Calu3 (cell line): ENCODE measurements at regions of chr2 and their contacts with region 1.

Region 1: GRCh38 chr2:158753641-158754611 is 41.2 kb upstream of the DAPL1 start:
- DNase-seq: peak; percentile 43
- H3K4me3 Mint-ChIP-seq: no peak overlapping the region
- H3K27ac Mint-ChIP-seq: no peak overlapping the region
- H3K4me1 Mint-ChIP-seq: no peaks in the 10 kb centered on the region
- H3K27me3 Mint-ChIP-seq: peaks cover 38% of the 10 kb centered on the region
- CTCF ChIP-seq: peak; percentile 78

Region 2: GRCh38 chr2:158024288-158024898 is 729.5 kb before region 1 on chr2:
- CTCF ChIA-PET with region 1: interaction called, 18 read pairs
- intact Hi-C with region 1: loop called (anchors 2 kb)
- DNase-seq: peak; percentile 64
- H3K4me3 Mint-ChIP-seq: no peak overlapping the region
- H3K27ac Mint-ChIP-seq: no peak overlapping the region
- H3K4me1 Mint-ChIP-seq: no peaks in the 10 kb centered on the region
- H3K27me3 Mint-ChIP-seq: no peaks in the 10 kb centered on the region
- CTCF ChIP-seq: peak; percentile 64

Region 3: DNA sequence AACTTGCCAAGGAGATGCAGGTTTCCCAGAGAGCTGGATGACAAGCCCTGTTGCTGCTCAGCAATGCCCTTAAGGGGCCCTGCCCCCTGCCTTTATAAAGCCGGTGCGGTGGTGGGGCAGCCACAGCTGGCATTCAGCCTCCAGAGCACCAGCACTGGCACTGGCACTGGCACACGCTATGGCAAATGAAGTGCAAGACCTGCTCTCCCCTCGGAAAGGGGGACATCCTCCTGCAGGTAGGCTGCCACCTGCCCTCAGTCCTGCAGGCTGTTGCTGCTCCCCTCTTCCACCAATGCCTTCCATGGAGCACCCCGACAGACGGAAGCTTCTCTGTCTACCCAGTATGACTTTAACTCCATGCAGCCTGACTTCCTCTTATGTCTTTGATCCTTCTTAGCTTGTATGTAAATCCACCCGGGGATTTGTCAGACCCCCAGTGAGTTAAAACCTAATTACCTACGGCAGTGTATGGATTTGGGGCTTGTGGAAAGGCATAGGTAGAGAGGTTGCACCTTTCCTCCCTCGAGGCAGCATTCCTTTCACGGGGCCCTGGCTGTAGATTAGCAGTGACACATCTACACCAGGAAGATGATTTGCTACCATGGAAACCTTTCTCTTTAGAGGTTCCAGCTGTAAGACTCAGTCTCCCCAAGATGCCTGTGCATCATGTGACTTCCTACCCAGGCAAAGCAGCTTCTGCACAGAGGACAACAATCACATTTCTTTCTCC is 41.4 kb after region 1 on chr2 and contains the start of gene DAPL1:
- CTCF ChIA-PET with region 1: no interaction called
- intact Hi-C with region 1: no loop called
- DNase-seq: peak; percentile 65
- H3K4me3 Mint-ChIP-seq: peak within 1 kb of the TSS; percentile 44
- H3K27ac Mint-ChIP-seq: no peak within 1 kb of the TSS
- H3K4me1 Mint-ChIP-seq: no peaks in the 10 kb centered on the region
- H3K27me3 Mint-ChIP-seq: peaks cover 24% of the 10 kb centered on the region
- CTCF ChIP-seq: no peak
- total RNA-seq, gene DAPL1: not detected in 2 replicates